CD4-positive, alpha-beta memory T cell (primary cell): ENCODE measurements at regions of chr15 and their contacts with region 1.

Region 1: GRCh38 chr15:34337557-34338306 is at the start of gene SLC12A6:
- DNase-seq: peak; percentile 92 to 94 (median 92)
- H3K4me3 ChIP-seq: peak within 1 kb of the TSS; percentile 62 to 98
- H3K4me3 Mint-ChIP-seq: peak within 1 kb of the TSS; percentile 94 to 100 (median 100)
- H3K27ac ChIP-seq: peak within 1 kb of the TSS; percentile 76
- H3K27ac Mint-ChIP-seq: peak within 1 kb of the TSS; percentile 91 to 99 (median 97)
- H3K4me1 ChIP-seq: peaks cover 70% of the 10 kb centered on the region
- H3K4me1 Mint-ChIP-seq: peaks cover 38 to 71% (median 49%) of the 10 kb centered on the region in 4 donors
- H3K27me3 ChIP-seq: no peaks in the 10 kb centered on the region
- H3K27me3 Mint-ChIP-seq: no peaks in the 10 kb centered on the region
- total RNA-seq, gene SLC12A6: 71.3 to 72.0 TPM

Region 2: DNA sequence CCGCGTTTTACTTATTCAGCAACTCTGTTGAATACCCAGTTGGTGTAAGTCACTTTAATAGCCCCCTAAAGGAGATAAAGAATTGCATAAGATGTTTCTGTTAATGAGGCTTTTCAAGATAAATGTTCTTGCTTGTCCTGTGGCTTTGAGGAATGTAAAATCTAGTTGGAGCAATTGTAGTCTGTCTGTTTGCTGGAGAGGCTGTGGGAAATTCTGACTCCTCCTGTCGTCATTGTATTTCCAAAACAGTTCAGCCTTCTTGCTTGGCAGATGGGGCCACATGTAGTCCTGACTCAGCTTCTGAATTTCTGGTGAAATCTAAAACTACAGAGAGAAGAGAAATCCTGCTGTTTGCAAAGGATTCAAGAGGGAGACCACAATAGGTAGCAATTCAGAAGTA is 912.6 kb before region 1 on chr15:
- CTCF ChIA-PET with region 1: no interaction called
- POLR2A ChIA-PET with region 1: no interaction called
- intact Hi-C with region 1: no loop called
- DNase-seq: no peak
- H3K4me3 ChIP-seq: no peak overlapping the region
- H3K4me3 Mint-ChIP-seq: no peak overlapping the region
- H3K27ac ChIP-seq: no peak overlapping the region
- H3K27ac Mint-ChIP-seq: no peak overlapping the region
- H3K4me1 ChIP-seq: no peaks in the 10 kb centered on the region
- H3K4me1 Mint-ChIP-seq: no peaks in the 10 kb centered on the region
- H3K27me3 ChIP-seq: no peaks in the 10 kb centered on the region
- H3K27me3 Mint-ChIP-seq: peaks cover 2 to 5% of the 10 kb centered on the region in 2 donors

Region 3: DNA sequence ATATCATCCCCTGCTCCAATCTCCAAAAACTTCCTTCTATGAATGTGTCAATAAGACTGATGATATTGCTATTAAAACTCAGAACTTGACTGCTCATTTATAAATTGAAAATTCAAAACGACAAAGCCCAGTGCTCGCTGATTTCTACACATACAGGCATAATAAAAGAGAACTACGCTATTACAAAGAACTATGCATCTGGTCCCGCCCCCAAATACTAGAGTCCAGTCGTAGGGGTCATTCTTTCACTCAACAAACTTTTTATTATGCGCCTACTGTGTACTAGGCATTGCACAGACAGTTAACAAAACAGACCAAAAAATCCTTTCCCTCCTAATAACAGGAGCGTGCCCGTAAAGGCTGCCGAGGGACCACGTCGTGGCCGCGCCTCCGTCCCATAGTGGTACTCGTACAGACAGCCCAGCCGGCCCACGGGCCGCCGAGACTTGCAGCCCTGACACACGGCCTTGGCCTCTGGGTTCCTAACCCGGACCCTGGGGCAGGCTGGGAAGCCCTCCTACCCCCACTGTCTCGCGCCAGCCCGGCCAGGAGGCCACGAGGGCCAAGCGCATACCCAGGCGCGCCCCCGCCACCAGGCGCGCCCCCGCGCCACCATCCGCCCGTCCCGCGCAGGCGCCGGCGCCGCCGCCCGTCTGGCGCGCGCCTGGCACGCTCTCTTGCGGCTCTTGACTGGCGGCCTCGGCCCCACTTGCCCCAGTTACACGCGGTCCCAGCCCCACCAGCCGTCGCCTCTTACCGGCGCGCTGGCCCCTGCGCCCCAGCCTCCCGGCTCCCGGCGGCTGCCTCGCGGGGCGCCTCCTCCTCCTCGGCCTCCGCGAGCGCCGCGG is 299.5 kb before region 1 on chr15:
- CTCF ChIA-PET with region 1: no interaction called
- POLR2A ChIA-PET with region 1: interaction called, 10 read pairs
- intact Hi-C with region 1: loop called (anchors 2 kb)
- DNase-seq: peak; percentile 65 to 74 (median 70)
- H3K4me3 ChIP-seq: peak overlapping the region; percentile 92 to 96
- H3K4me3 Mint-ChIP-seq: peak overlapping the region; percentile 85 to 97 (median 94)
- H3K27ac ChIP-seq: peak overlapping the region; percentile 73
- H3K27ac Mint-ChIP-seq: peak overlapping the region; percentile 83 to 96 (median 93)
- H3K4me1 ChIP-seq: peaks cover 13% of the 10 kb centered on the region
- H3K4me1 Mint-ChIP-seq: peaks cover 9 to 23% (median 15%) of the 10 kb centered on the region in 4 donors
- H3K27me3 ChIP-seq: no peaks in the 10 kb centered on the region
- H3K27me3 Mint-ChIP-seq: no peaks in the 10 kb centered on the region

Region 4: DNA sequence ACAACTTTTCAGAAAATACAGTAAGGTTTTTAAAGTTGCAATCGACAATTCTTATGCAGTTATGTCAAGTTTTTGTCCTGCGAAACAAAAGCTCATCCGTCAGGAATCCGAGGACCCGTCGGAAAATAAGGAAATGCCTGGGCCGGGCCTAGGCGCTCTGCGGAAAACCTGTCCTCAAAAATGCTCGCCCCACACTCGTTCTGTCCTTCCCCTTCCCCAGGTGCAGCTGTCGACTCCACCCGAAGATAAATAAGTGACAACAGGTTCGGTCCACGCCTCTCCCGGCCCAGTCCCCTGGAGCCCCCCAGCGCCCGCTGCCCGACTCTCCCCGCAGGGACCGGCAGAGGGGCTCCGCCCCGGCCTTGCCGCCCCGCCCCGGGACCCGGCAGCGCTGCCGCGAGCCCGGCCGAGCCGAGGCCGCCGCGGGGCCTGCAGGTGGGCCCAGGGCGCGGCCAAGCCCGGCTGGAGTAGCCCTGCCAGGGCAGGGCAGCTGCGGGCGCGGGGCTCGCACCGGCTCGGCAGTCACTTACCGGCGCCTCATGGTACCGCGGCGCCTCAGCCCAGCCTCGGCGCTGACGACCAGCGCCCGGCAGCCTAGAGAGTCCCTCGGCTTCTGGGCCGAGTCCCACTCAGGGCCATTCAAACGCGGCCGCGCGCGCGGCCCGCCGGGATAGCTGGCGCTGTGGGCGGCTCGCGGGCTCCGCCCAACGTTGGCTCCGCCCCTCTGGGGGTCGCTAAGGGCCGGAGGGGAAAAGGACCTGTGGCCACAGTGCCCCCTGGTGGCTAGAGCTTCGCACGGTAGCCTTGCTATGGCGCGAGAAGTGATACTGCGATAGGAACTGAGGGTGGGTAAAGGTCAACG is 128.1 kb before region 1 on chr15 and contains the start of gene KATNBL1:
- CTCF ChIA-PET with region 1: interaction called, 6 read pairs
- POLR2A ChIA-PET with region 1: interaction called, 7 read pairs
- intact Hi-C with region 1: loop called (anchors 1 kb)
- DNase-seq: peak; percentile 89 to 92 (median 89)
- H3K4me3 ChIP-seq: peak within 1 kb of the TSS; percentile 37 to 72
- H3K4me3 Mint-ChIP-seq: peak within 1 kb of the TSS; percentile 88 to 95 (median 92)
- H3K27ac ChIP-seq: peak within 1 kb of the TSS; percentile 66
- H3K27ac Mint-ChIP-seq: peak within 1 kb of the TSS; percentile 61 to 93 (median 91)
- H3K4me1 ChIP-seq: peaks cover 13% of the 10 kb centered on the region
- H3K4me1 Mint-ChIP-seq: peaks cover 15 to 29% (median 21%) of the 10 kb centered on the region in 4 donors
- H3K27me3 ChIP-seq: no peaks in the 10 kb centered on the region
- H3K27me3 Mint-ChIP-seq: peaks cover 0 to 4% of the 10 kb centered on the region in 2 donors
- total RNA-seq, gene KATNBL1: 34.7 to 37.9 TPM

Region 5: GRCh38 chr15:34241372-34242330 is 96.1 kb before region 1 on chr15:
- CTCF ChIA-PET with region 1: interaction called, 22 read pairs
- POLR2A ChIA-PET with region 1: interaction called, 21 read pairs
- intact Hi-C with region 1: loop called (anchors 1 kb)
- DNase-seq: peak; percentile 42 to 56 (median 55)
- H3K4me3 ChIP-seq: no peak overlapping the region
- H3K4me3 Mint-ChIP-seq: no peak overlapping the region
- H3K27ac ChIP-seq: no peak overlapping the region
- H3K27ac Mint-ChIP-seq: peak overlapping the region in 4 of 7 donors; percentile 4 to 53 (median 46)
- H3K4me1 ChIP-seq: no peaks in the 10 kb centered on the region
- H3K4me1 Mint-ChIP-seq: no peaks in the 10 kb centered on the region
- H3K27me3 ChIP-seq: no peaks in the 10 kb centered on the region
- H3K27me3 Mint-ChIP-seq: no peaks in the 10 kb centered on the region

Region 6: GRCh38 chr15:34318277-34319079 is 19.3 kb before region 1 on chr15:
- CTCF ChIA-PET with region 1: interaction called, 6 read pairs
- POLR2A ChIA-PET with region 1: interaction called, 51 read pairs
- intact Hi-C with region 1: loop called (anchors 1 kb)
- DNase-seq: peak in 4 of 5 donors; percentile 12 to 50 (median 22)
- H3K4me3 ChIP-seq: peak overlapping the region; percentile 52 to 55
- H3K4me3 Mint-ChIP-seq: peak overlapping the region; percentile 93 to 99 (median 98)
- H3K27ac ChIP-seq: peak overlapping the region; percentile 49
- H3K27ac Mint-ChIP-seq: peak overlapping the region; percentile 65 to 96 (median 94)
- H3K4me1 ChIP-seq: peaks cover 31% of the 10 kb centered on the region
- H3K4me1 Mint-ChIP-seq: peaks cover 31 to 45% (median 38%) of the 10 kb centered on the region in 4 donors
- H3K27me3 ChIP-seq: no peaks in the 10 kb centered on the region
- H3K27me3 Mint-ChIP-seq: no peaks in the 10 kb centered on the region

Region 7: GRCh38 chr15:34353627-34354026 is 15.9 kb after region 1 on chr15:
- CTCF ChIA-PET with region 1: no interaction called
- POLR2A ChIA-PET with region 1: no interaction called
- intact Hi-C with region 1: no loop called
- DNase-seq: no peak
- H3K4me3 ChIP-seq: no peak overlapping the region
- H3K4me3 Mint-ChIP-seq: no peak overlapping the region
- H3K27ac ChIP-seq: no peak overlapping the region
- H3K27ac Mint-ChIP-seq: peak overlapping the region in 1 of 7 donors; percentile 47
- H3K4me1 ChIP-seq: no peaks in the 10 kb centered on the region
- H3K4me1 Mint-ChIP-seq: peaks cover 0 to 3% (median 0%) of the 10 kb centered on the region in 4 donors
- H3K27me3 ChIP-seq: no peaks in the 10 kb centered on the region
- H3K27me3 Mint-ChIP-seq: no peaks in the 10 kb centered on the region

Region 8: GRCh38 chr15:34367101-34368081 is 29.7 kb after region 1 on chr15 and contains the start of gene LPCAT4:
- CTCF ChIA-PET with region 1: interaction called, 111 read pairs
- POLR2A ChIA-PET with region 1: interaction called, 144 read pairs
- intact Hi-C with region 1: loop called (anchors 1 kb)
- DNase-seq: peak; percentile 89 to 93 (median 92)
- H3K4me3 ChIP-seq: peak within 1 kb of the TSS; percentile 86 to 94
- H3K4me3 Mint-ChIP-seq: peak within 1 kb of the TSS; percentile 94 to 99 (median 97)
- H3K27ac ChIP-seq: peak within 1 kb of the TSS; percentile 87
- H3K27ac Mint-ChIP-seq: peak within 1 kb of the TSS; percentile 94 to 97 (median 96)
- H3K4me1 ChIP-seq: peaks cover 31% of the 10 kb centered on the region
- H3K4me1 Mint-ChIP-seq: peaks cover 27 to 57% (median 38%) of the 10 kb centered on the region in 4 donors
- H3K27me3 ChIP-seq: no peaks in the 10 kb centered on the region
- H3K27me3 Mint-ChIP-seq: no peaks in the 10 kb centered on the region
- total RNA-seq, gene LPCAT4: 100 to 108 TPM

Region 9: DNA sequence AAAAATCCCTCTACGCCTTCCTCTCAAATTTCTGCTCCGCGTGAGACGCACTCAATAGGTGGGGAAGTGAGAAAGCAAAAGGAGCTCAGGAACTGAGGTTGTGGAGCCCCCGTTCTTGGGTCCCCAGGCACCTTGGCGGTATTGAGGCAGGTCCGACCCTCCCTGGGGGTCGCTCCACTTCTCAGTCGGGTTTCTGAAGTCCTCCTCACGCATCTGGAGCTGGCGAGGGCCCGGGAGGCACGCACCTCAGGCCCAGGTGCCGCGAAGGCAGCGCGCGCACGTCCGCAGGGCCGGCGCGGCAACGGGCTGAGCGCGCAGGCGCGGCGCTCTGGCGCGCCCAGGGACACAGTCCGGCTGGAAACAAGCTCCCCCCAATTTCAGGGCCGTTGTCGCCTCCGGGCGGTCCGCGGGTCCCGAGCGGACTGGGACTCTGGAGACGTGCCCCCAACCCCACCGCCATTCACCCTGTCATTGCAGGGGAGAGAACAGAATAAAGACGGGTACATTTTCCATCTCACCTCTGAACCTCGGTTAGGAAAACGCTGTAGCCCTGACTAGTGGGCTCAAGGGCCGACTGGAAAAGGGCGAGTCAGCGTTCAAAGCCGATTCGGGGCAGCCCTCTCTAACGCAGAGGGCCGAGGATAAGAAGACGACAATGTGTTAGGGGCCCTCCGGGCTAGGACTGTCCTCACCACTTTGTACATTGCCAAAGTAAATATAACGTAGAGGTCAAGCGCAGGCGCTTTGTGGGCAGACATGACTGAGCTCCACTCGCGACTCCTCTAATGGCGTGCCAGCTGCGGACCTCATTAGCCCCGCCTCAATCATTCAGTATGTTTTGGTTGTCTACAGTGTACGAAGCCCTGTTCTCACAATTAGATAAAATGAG is 650.5 kb after region 1 on chr15 and contains the start of gene ZNF770:
- CTCF ChIA-PET with region 1: no interaction called
- POLR2A ChIA-PET with region 1: interaction called, 4 read pairs
- intact Hi-C with region 1: loop called (anchors 10 kb)
- DNase-seq: peak; percentile 76 to 88 (median 85)
- H3K4me3 ChIP-seq: peak within 1 kb of the TSS; percentile 97 to 100
- H3K4me3 Mint-ChIP-seq: peak within 1 kb of the TSS; percentile 94 to 100 (median 98)
- H3K27ac ChIP-seq: peak within 1 kb of the TSS; percentile 96
- H3K27ac Mint-ChIP-seq: peak within 1 kb of the TSS; percentile 98 to 100 (median 99)
- H3K4me1 ChIP-seq: peaks cover 47% of the 10 kb centered on the region
- H3K4me1 Mint-ChIP-seq: peaks cover 29 to 54% (median 38%) of the 10 kb centered on the region in 4 donors
- H3K27me3 ChIP-seq: no peaks in the 10 kb centered on the region
- H3K27me3 Mint-ChIP-seq: peaks cover 0 to 3% of the 10 kb centered on the region in 2 donors
- total RNA-seq, gene ZNF770: 55.8 to 63.5 TPM